Cardiac septum (tissue), 1 donor: ENCODE measurements at regions of chr13 and their contacts with region 1.

Region 1: GRCh38 chr13:41075034-41075433 is 13.7 kb downstream of the WBP4 start:
- DNase-seq: no peak

Region 2: DNA sequence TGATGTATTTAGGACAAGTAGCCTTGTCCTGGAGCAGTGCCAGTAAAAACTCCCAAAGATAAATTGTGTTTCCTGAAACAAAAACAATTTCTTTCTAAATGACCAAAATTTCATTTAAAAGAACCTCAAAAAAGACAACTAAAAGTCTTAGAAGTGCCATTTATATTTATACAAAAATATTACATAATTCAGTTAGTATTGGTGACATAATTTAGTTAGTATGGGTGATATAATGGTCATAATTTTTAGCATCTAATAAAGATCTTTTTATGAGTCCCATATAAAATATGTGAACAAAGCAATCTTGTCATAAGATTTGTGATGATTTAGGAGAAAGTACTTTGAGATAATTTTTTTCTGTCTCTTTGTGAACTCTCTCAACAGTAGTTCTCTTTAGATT is 132.0 kb before region 1 on chr13:
- intact Hi-C with region 1: no loop called
- DNase-seq: no peak

Region 3: GRCh38 chr13:40992678-40993518 is 82.1 kb before region 1 on chr13:
- intact Hi-C with region 1: no loop called
- DNase-seq: no peak

Region 4: GRCh38 chr13:41111454-41111853 is 36.4 kb after region 1 on chr13:
- intact Hi-C with region 1: no loop called
- DNase-seq: no peak

Region 5: DNA sequence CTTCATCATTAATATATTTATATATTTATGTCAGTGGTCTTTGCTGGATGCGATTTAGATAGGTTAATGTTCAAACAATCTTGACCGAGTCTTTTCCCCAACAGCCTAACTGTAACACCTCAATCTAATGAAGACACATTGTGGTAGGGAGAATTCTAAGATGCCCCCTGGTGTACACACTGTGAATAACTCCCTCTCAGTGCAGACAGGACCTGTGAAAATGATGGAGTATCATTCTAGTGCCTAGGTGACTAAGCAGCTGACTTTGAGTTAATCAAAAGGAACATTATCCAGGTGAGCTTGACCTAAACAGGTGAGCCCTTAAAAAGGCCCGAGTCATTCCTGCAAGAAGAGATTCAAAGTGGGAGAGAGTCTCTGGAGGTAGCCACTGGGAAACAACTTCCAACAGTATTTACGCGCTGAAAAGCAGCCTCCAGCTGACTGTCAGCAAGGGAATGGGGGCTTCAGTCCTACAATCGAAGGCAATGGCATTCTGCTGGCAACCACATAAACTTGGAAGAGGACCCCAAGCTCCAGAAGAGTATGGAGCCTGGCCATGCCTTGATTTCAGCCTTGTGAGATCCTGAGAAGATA is 147.3 kb after region 1 on chr13:
- intact Hi-C with region 1: loop called (anchors 2 kb)
- DNase-seq: no peak